Lower leg skin (tissue), 4 donors: ENCODE measurements at regions of chr5 and their contacts with region 1.

Region 1: DNA sequence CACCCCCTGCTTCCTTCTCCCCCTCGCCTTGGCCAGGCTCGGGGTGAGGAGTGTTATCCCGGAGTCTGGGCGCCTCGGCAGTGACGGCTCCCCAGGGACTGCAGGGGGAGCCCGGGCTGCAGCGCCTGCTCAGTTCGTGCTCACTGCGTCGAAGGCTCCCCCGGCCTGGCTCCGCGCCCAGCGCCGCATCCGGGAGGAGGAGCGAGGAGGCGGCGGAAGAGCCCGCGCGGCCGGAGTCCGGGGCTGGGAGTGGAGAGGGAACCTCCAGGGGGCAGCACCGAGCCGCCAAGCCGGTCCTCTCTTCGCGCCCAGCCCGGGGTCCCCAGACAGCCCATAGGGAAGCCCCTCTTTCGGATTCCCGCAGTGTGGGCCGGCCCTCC is 1.3 kb upstream of the EGR1 start:
- DNase-seq: peak; percentile 90 to 99
- H3K4me3 ChIP-seq: peak overlapping the region; percentile 61
- CTCF ChIP-seq: peak in 1 of 3 donors; percentile 82
- POLR2A ChIP-seq: no peak

Region 2: GRCh38 chr5:138402640-138403039 is 61.4 kb before region 1 on chr5:
- intact Hi-C with region 1: no loop called
- DNase-seq: no peak
- H3K4me3 ChIP-seq: no peak overlapping the region
- CTCF ChIP-seq: no peak
- POLR2A ChIP-seq: no peak

Region 3: GRCh38 chr5:138503487-138504270 is 39.7 kb after region 1 on chr5:
- intact Hi-C with region 1: loop called (anchors 5 kb)
- DNase-seq: peak in 1 of 2 donors; percentile 85
- H3K4me3 ChIP-seq: no peak overlapping the region
- CTCF ChIP-seq: peak in 1 of 3 donors; percentile 58
- POLR2A ChIP-seq: no peak

Region 4: DNA sequence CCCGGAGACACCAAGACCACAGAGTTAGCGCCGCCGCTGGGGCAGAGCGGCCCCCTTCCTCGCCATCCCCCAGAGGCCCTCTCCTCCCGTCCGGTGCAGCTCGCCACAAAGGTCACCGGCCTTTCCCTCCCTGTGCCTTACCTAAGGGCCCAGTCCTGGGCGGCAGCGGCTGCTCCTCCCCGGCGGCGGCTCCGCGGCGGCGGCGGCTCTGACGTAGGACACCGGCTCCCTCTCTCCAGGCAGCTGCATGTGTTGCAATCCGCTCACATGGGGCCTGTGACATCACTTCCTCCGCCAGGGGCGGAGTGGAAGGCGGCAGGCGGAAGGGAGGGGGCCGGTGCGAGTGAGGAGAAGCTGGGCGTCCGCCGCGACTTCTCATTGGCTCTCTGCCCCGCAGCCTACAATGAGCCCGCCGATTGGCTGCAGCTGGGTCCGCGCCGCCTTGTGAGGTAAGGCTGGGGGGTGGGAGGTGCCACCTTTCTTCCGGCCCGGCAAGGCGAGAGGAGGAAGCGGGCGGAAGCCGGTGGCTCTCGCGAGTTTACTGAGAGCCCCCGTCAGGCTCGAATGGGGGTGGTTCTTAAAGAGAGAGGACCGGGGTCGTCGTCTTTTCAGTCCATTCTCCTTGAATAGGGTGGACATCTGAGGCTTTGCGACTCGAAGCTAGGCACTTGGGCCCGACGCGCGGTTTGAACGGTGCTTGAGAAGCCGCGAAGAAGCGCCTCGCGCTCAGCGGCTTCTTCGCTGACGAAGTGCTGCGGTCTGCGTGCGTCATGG is 79.1 kb after region 1 on chr5 and contains the start of gene ETF1:
- intact Hi-C with region 1: loop called (anchors 10 kb)
- DNase-seq: peak; percentile 100
- H3K4me3 ChIP-seq: peak within 1 kb of the TSS; percentile 97
- CTCF ChIP-seq: no peak
- POLR2A ChIP-seq: peak in 1 of 2 donors; percentile 96
- total RNA-seq, gene ETF1: 64.2 to 92.2 (median 81.3) TPM